ENCODE measurements at regions of chr2 and their contacts with region 1.

Region 1: DNA sequence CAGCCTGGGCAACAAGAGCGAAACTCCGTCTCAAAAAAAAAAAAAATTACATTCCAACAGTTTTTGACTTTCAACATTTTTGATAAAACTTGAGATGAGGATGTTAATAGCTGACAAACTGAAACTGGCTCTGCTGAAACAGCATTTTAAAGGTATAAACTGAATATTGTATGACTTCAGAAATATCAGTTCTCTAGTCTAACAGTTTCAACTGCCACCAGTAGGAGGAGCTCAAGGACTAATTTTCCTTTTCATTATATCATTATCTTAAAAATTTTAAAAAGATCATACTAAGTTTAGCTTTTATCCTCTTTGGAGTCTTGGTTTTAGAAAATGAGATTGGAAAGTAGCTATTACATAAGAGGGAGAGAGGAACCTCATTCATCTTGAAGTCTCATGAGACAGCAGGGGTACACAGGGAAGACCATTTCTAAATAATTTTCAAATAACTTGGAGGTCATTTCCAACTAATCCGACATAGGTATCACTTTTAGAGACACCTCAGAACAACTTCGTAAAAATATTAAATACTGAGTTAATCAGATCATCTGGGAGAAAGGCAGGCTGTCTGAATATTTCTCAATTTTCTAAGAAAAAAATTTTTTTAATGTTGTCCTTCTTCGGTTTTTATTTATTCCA is 37.6 kb upstream of the MCM6 start:
- DNase-seq: peak; percentile 76
- ATAC-seq: peak; percentile 43
- H3K4me3 ChIP-seq: no peak overlapping the region
- H3K27ac ChIP-seq: peak overlapping the region; percentile 76
- H3K4me1 ChIP-seq: peaks cover 15% of the 10 kb centered on the region
- H3K27me3 ChIP-seq: no peaks in the 10 kb centered on the region
- CTCF ChIP-seq: peak; percentile 84

Region 2: GRCh38 chr2:135271006-135271405 is 642.8 kb before region 1 on chr2:
- CTCF ChIA-PET with region 1: no interaction called
- POLR2A ChIA-PET with region 1: no interaction called
- intact Hi-C with region 1: no loop called
- DNase-seq: no peak
- ATAC-seq: no peak
- H3K4me3 ChIP-seq: no peak overlapping the region
- H3K27ac ChIP-seq: no peak overlapping the region
- H3K4me1 ChIP-seq: no peaks in the 10 kb centered on the region
- H3K27me3 ChIP-seq: no peaks in the 10 kb centered on the region
- CTCF ChIP-seq: no peak

Region 3: GRCh38 chr2:135948642-135949355 is 35.0 kb after region 1 on chr2:
- CTCF ChIA-PET with region 1: interaction called, 4 read pairs
- POLR2A ChIA-PET with region 1: no interaction called
- intact Hi-C with region 1: loop called (anchors 2 kb)
- DNase-seq: peak; percentile 89
- ATAC-seq: peak; percentile 84
- H3K4me3 ChIP-seq: peak overlapping the region; percentile 60
- H3K27ac ChIP-seq: peak overlapping the region; percentile 93
- H3K4me1 ChIP-seq: peaks cover 30% of the 10 kb centered on the region
- H3K27me3 ChIP-seq: no peaks in the 10 kb centered on the region
- CTCF ChIP-seq: no peak

Region 4: GRCh38 chr2:135985018-135985825 is 71.4 kb after region 1 on chr2 and contains the start of gene DARS1:
- CTCF ChIA-PET with region 1: no interaction called
- POLR2A ChIA-PET with region 1: no interaction called
- intact Hi-C with region 1: loop called (anchors 5 kb)
- DNase-seq: peak; percentile 92
- ATAC-seq: peak; percentile 92
- H3K4me3 ChIP-seq: peak within 1 kb of the TSS; percentile 89
- H3K27ac ChIP-seq: peak within 1 kb of the TSS; percentile 95
- H3K4me1 ChIP-seq: peaks cover 19% of the 10 kb centered on the region
- H3K27me3 ChIP-seq: no peaks in the 10 kb centered on the region
- CTCF ChIP-seq: no peak
- total RNA-seq, gene DARS1: 56.7 and 78.6 TPM in 2 replicates

Region 5: DNA sequence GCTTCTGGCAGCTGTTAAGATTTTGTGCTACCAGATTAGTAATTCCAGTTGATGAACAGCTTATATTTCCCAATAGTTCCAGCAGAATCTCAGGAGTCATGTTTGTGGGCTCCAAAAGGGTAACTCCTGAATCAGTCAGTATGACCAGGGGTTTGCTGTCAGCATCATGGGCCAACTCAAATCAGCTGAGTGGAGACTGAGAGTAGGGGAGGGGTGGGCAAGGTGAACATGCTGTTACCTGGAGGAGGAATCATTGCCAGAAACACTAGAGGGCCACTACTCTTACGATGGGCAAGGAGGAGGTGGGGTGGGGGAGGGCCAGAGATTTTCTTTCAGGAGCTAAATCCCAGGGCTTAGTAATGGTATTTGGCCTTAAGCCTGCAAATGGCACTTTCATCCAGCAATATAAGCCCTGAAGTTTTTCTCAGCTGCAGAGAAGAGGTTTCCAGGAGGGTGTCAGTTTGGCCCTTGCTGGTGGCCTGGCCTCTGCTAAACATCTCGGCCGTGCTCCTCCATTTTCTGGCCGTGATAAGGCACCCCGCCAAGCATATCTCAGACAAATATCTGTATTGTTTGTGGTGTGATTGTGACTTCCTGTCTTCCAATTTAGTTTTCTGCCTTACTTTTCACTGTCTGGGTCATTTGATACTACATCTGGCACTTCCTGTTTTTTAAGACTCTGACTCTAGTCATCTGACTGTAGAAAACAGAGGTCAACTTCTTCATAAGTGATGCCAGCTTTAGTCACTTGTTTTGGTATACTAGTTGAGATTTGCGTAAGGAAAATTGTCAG is 324.6 kb after region 1 on chr2:
- CTCF ChIA-PET with region 1: no interaction called
- POLR2A ChIA-PET with region 1: no interaction called
- intact Hi-C with region 1: loop called (anchors 5 kb)
- DNase-seq: peak; percentile 68
- ATAC-seq: peak; percentile 47
- H3K4me3 ChIP-seq: no peak overlapping the region
- H3K27ac ChIP-seq: peak overlapping the region; percentile 39
- H3K4me1 ChIP-seq: peaks cover 27% of the 10 kb centered on the region
- H3K27me3 ChIP-seq: no peaks in the 10 kb centered on the region
- CTCF ChIP-seq: no peak

Region 6: DNA sequence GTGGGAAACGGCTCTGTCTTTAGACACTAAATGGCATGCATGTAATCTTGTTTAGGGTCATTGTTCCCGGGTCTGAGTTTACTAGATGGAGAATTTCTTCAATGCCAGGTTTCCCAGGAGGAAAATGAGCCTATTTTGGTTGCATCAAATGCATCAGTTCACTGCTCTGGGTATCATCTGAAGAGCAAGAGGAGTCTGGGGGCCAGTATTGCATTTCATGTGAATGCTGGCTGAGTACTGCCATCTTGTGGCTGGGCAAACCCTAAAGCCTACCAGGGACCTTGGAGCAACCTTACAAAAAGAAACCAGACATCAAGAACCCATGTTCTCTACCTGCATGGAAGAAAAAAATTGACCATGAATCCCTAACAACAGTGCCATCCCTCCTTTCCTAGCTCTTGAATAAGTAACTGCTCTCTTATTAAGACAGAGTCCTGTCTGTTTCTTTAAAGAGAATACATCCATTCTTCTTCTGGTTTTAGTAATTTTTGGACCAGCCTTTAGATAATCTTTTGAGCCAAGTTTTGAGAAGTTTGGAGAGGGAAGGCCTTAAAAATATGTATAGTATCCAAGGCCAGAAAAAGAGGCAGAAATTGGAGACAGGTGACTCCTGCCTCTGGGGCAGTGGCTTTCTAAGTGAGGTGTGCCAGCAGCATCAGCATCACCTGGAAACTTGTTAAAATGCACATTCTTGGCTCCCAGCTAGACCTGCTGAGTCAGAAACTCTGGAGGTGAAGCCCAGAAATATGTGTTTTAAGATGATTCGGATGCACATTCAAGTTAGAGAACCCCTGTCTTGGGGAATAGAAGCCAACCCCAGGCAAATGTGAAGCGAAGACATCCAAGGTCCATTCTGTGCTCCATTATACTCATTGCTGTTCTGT is 465.1 kb after region 1 on chr2:
- CTCF ChIA-PET with region 1: interaction called, 4 read pairs
- POLR2A ChIA-PET with region 1: no interaction called
- intact Hi-C with region 1: loop called (anchors 1 kb)
- DNase-seq: peak; percentile 61
- ATAC-seq: peak; percentile 81
- H3K4me3 ChIP-seq: no peak overlapping the region
- H3K27ac ChIP-seq: no peak overlapping the region
- H3K4me1 ChIP-seq: no peaks in the 10 kb centered on the region
- H3K27me3 ChIP-seq: peaks cover 3% of the 10 kb centered on the region; the same call in 1 of the 2 replicates
- CTCF ChIP-seq: peak; percentile 83

Region 7: GRCh38 chr2:136423516-136423996 is 509.7 kb after region 1 on chr2:
- CTCF ChIA-PET with region 1: no interaction called
- POLR2A ChIA-PET with region 1: no interaction called
- intact Hi-C with region 1: loop called (anchors 1 kb)
- DNase-seq: peak; percentile 72
- ATAC-seq: peak; percentile 97
- H3K4me3 ChIP-seq: peak overlapping the region; percentile 61
- H3K27ac ChIP-seq: no peak overlapping the region
- H3K4me1 ChIP-seq: peaks cover 9% of the 10 kb centered on the region; the same call in 1 of the 2 replicates
- H3K27me3 ChIP-seq: peaks cover 75% of the 10 kb centered on the region
- CTCF ChIP-seq: peak; percentile 88